Caco-2 (cell line): ENCODE measurements at regions of chr1 and their contacts with region 1.

Region 1: GRCh38 chr1:28313710-28314546 is 14.9 kb upstream of the MED18 start:
- DNase-seq: peak; percentile 75
- H3K4me3 ChIP-seq: no peak overlapping the region
- H3K4me3 Mint-ChIP-seq: peak overlapping the region; percentile 37
- H3K27ac Mint-ChIP-seq: peak overlapping the region; percentile 90
- H3K4me1 ChIP-seq: peaks cover 10% of the 10 kb centered on the region
- H3K4me1 Mint-ChIP-seq: peaks cover 8% of the 10 kb centered on the region
- H3K27me3 ChIP-seq: no peaks in the 10 kb centered on the region
- H3K27me3 Mint-ChIP-seq: no peaks in the 10 kb centered on the region
- CTCF ChIP-seq: no peak

Region 2: DNA sequence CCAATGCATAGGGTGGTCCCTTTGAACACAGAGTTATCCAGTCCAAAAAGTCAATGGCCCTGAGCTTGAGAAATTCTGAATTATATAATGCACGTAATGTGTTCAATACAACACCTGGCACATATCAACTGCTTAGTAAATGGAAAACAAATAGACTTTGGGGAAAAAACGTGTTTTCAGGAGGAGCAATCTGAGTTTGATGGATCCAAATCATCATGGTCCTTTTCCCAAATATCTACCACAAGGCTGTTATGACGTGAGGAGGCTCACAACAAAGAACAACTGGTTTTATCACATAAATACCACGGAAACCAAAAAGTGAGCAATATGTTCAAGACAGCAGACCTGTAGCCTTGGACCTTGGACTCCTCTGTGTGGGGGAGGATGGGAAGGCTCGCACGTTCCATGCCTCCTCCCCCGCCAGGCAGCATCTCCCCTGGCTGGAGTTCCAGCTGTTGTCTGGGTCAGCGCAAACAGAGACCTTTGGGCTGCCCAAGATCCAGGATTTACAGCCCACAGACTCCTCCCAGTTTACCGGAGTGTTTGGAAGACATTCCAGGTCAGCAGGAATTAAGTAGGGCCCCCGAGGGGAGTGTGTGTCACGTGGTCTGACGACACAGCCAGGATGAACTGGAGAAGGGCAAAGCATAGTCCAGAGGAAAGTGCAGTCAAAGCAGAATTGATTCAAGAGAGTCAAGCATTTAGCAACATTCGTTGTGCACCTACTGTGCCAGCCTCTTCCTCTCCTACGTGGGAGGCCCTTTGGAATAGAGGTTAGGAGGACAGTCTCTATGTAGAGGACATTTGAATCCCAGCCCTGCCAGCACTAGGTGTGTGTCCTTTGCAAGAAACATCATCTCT is 17.3 kb before region 1 on chr1:
- CTCF ChIA-PET with region 1: no interaction called
- POLR2A ChIA-PET with region 1: no interaction called
- intact Hi-C with region 1: loop called (anchors 2 kb)
- DNase-seq: peak; percentile 92 to 97
- H3K4me3 ChIP-seq: no peak overlapping the region
- H3K4me3 Mint-ChIP-seq: peak overlapping the region; percentile 56
- H3K27ac Mint-ChIP-seq: peak overlapping the region; percentile 93
- H3K4me1 ChIP-seq: peaks cover 17% of the 10 kb centered on the region
- H3K4me1 Mint-ChIP-seq: peaks cover 12% of the 10 kb centered on the region
- H3K27me3 ChIP-seq: no peaks in the 10 kb centered on the region
- H3K27me3 Mint-ChIP-seq: no peaks in the 10 kb centered on the region
- CTCF ChIP-seq: no peak

Region 3: DNA sequence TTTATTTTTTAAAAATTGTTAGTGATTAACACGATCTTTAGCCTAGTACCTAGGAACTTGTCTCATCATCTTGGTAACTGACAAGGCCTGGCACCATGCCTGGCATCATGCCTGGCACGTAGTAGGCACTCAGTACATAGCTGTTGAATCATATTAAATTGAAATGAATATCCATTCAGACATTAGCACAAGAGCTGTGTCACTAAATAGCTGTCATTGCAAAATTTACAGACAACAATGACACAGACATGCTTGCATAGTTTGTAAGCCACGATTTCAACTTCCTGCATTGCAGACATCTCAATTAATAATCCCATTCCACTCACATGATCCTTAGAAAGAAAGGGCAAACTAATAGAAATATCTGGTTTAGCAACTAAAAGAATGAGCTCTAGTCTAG is 40.2 kb after region 1 on chr1:
- CTCF ChIA-PET with region 1: no interaction called
- POLR2A ChIA-PET with region 1: no interaction called
- intact Hi-C with region 1: no loop called
- DNase-seq: no peak
- H3K4me3 ChIP-seq: no peak overlapping the region
- H3K4me3 Mint-ChIP-seq: no peak overlapping the region
- H3K27ac Mint-ChIP-seq: no peak overlapping the region
- H3K4me1 ChIP-seq: 0 out of 2 replicates have a peak, but pooled peaks cover 4% of the 10 kb centered on the region
- H3K4me1 Mint-ChIP-seq: no peaks in the 10 kb centered on the region
- H3K27me3 ChIP-seq: no peaks in the 10 kb centered on the region
- H3K27me3 Mint-ChIP-seq: no peaks in the 10 kb centered on the region
- CTCF ChIP-seq: no peak